ENCODE measurements at regions of chr7 and their contacts with region 1.

Region 1: DNA sequence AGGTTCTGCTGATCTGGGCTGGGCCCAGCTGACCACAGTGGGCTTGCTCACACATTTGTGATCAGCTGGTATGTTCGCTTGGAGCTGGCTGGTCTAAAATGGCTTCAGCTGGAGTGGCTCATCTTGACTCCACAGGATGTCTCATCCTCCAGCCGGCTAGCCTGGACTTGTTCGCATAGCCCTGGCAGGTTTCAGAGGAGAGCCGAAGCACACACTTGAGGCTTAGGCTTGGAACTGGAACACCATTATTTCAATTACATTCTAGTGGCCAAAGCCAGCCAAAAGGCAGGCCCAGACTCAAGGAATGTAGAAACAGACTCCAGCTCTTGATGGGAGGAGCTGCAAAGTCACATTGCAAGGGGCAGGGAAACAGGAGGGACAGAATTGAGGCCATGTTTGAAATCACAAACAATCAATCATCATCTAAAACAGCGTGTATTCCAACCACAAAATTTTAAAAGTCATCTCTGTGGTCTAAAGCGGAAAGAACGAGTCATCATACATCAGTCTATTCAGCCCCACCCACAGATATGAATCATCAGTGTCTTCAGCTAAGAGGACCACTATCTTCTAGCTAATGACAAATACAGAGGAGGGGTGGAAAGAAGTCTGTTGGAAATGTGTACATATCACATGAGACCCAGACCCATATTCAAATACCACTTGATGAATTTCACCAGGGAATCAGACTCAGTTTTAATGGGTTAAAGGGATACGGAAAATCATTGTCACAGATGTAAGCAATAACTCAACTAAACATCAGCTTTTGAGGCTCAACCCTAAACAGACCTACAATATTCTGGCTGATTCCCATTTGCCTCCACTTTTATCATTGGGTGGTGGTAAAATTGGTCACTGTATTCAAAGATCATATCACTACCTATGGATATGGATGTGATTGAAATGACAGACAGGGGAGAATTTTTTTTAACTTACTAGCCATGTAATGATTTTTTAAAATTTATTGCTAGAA is 139.0 kb upstream of the MKLN1 start:
- DNase-seq: peak; percentile 3 to 91 (median 56)
- ATAC-seq: peak; percentile 88
- H3K4me3 ChIP-seq: no peak overlapping the region
- H3K4me3 Mint-ChIP-seq: no peak overlapping the region
- H3K27ac ChIP-seq: peak overlapping the region; percentile 6 to 73
- H3K27ac Mint-ChIP-seq: peak overlapping the region; percentile 42
- H3K4me1 ChIP-seq: peaks cover 18% of the 10 kb centered on the region
- H3K4me1 Mint-ChIP-seq: peaks cover 22% of the 10 kb centered on the region
- H3K27me3 ChIP-seq: no peaks in the 10 kb centered on the region
- H3K27me3 Mint-ChIP-seq: no peaks in the 10 kb centered on the region
- CTCF ChIP-seq: no peak

Region 2: GRCh38 chr7:131231381-131232220 is 42.9 kb after region 1 on chr7:
- CTCF ChIA-PET with region 1: interaction called, 3 read pairs
- POLR2A ChIA-PET with region 1: no interaction called
- intact Hi-C with region 1: loop called (anchors 1 to 2 kb)
- DNase-seq: peak; percentile 38 to 87 (median 66)
- ATAC-seq: peak; percentile 81
- H3K4me3 ChIP-seq: peak overlapping the region; percentile 13 to 31
- H3K4me3 Mint-ChIP-seq: peak overlapping the region; percentile 68
- H3K27ac ChIP-seq: peak overlapping the region; percentile 63 to 66
- H3K27ac Mint-ChIP-seq: peak overlapping the region; percentile 91
- H3K4me1 ChIP-seq: peaks cover 32% of the 10 kb centered on the region
- H3K4me1 Mint-ChIP-seq: peaks cover 35% of the 10 kb centered on the region
- H3K27me3 ChIP-seq: no peaks in the 10 kb centered on the region
- H3K27me3 Mint-ChIP-seq: no peaks in the 10 kb centered on the region
- CTCF ChIP-seq: no peak

Region 3: DNA sequence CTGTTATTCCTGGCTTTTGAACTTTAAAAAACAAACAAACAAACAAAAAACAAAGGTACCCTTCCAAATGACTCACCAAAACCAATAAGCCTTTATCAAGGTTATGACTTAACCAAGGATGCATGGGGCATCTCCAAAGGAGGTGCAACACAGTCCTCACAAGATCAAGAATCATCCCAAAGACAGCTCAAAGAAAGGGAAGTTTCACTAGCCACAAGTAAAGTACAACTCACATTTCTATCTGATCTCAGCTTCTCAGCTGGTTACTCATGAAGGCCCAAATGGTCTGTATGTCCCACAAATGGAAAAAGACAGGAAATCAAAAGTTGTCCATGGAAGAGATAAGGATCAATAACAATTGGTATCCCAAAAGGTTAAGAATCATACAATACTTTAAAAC is 133.0 kb after region 1 on chr7:
- CTCF ChIA-PET with region 1: no interaction called
- POLR2A ChIA-PET with region 1: no interaction called
- intact Hi-C with region 1: no loop called
- DNase-seq: no peak
- ATAC-seq: no peak
- H3K4me3 ChIP-seq: no peak overlapping the region
- H3K4me3 Mint-ChIP-seq: no peak overlapping the region
- H3K27ac ChIP-seq: no peak overlapping the region
- H3K27ac Mint-ChIP-seq: no peak overlapping the region
- H3K4me1 ChIP-seq: peaks cover 3% of the 10 kb centered on the region
- H3K4me1 Mint-ChIP-seq: peaks cover 24% of the 10 kb centered on the region
- H3K27me3 ChIP-seq: no peaks in the 10 kb centered on the region
- H3K27me3 Mint-ChIP-seq: no peaks in the 10 kb centered on the region
- CTCF ChIP-seq: no peak

Region 4: DNA sequence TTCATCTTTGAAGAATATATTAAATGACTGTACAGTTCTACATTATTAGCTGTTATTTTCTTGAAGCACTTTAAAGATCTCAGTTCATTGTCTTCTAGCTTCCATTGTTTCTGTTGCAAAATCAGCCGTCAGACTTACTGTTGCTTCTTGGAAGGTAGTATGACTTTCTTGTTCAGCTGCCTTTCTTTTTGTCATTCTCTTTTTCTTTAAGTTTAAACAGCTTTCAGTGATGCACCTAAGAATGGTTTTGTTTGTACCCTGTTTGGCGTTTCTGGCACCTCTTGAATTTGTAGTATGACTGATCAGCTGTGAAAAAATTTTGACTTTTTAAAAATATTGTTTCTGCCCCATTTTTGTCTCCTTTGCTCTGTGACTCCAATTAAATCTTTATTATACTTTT is 148.3 kb after region 1 on chr7:
- CTCF ChIA-PET with region 1: no interaction called
- POLR2A ChIA-PET with region 1: no interaction called
- intact Hi-C with region 1: no loop called
- DNase-seq: peak in 1 of 9 experiments; percentile 23
- ATAC-seq: no peak
- H3K4me3 ChIP-seq: no peak overlapping the region
- H3K4me3 Mint-ChIP-seq: no peak overlapping the region
- H3K27ac ChIP-seq: no peak overlapping the region
- H3K27ac Mint-ChIP-seq: no peak overlapping the region
- H3K4me1 ChIP-seq: peaks cover 7% of the 10 kb centered on the region
- H3K4me1 Mint-ChIP-seq: peaks cover 59% of the 10 kb centered on the region
- H3K27me3 ChIP-seq: no peaks in the 10 kb centered on the region
- H3K27me3 Mint-ChIP-seq: no peaks in the 10 kb centered on the region
- CTCF ChIP-seq: no peak

Measured in CD8-positive, alpha-beta T cell (primary cell).